Left cardiac atrium (tissue), 4 donors: ENCODE measurements at regions of chr6 and their contacts with region 1.

Region 1: DNA sequence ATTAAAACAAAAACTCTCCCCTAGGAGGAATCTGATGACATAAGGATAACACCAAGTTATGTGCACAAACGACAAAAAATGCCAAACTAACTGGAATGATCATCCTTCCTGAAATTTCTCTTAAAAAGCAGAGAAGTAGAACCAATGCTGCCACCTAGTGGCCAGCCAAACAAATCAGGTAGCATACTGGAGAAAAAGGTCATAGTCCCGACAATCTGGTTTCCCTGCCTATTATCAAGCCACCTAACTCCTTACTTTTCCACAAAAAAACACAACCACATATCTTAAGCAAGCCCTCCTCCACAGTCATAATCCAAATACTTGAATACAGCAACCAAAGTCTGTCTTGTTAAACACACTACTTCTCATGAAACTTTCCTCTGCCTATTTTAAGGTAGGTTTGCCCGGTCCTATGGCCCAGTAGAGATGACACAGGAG is 5.3 kb downstream of the OARD1 start:
- DNase-seq: peak; percentile 80
- ATAC-seq: no peak

Region 2: GRCh38 chr6:40755046-40755681 is 311.7 kb before region 1 on chr6:
- intact Hi-C with region 1: no loop called
- DNase-seq: no peak
- ATAC-seq: peak in 1 of 2 donors; percentile 29

Region 3: DNA sequence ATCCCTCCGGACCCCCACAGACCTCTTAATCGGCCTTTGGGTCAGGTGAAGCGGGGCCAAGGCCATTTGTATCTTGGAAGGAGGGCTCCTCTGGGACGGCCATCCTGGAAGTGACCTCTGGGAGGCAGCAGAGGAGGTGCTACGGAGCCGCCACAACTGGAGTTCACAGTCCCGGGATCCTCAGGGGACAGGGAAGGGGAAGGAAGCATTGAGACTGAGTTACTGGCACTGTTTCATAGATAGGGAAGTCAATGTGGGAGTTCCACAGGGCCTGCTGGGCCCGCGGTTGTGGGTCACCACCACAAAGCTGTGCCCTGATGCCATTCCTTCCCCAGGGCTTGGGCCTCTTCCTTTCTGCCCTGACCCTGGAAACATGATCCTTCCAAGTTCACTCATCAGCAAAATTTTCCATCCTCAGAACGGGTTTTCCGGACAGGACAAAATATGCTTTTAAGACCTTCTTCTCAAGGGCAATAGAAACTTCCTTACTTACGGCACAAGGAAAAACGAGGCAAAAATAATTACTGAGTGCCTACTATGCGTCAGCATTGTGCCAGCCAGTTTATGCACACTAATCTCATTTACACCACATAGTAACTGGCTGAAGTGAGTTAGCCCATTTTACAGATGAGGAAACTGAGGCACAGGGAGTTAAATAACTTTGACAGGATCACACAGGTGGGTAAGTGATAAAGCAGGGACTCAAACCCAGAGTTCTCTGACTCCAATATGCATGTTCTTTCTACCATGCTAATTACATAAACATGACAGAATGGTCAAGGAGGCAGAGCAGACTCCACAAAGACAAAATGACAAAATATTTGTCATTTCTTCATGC is 171.7 kb before region 1 on chr6:
- intact Hi-C with region 1: loop called in 1 of 2 experiments (anchors 2 kb)
- DNase-seq: peak; percentile 64
- ATAC-seq: peak; percentile 77 to 87

Region 4: GRCh38 chr6:41027799-41028628 is 38.9 kb before region 1 on chr6:
- intact Hi-C with region 1: loop called in 1 of 2 experiments (anchors 2 kb)
- DNase-seq: peak; percentile 90
- ATAC-seq: peak; percentile 96 to 97

Region 5: GRCh38 chr6:41150669-41151068 is 83.8 kb after region 1 on chr6:
- intact Hi-C with region 1: no loop called
- DNase-seq: no peak
- ATAC-seq: no peak